ENCODE measurements at regions of chr9 and their contacts with region 1.

Region 1: DNA sequence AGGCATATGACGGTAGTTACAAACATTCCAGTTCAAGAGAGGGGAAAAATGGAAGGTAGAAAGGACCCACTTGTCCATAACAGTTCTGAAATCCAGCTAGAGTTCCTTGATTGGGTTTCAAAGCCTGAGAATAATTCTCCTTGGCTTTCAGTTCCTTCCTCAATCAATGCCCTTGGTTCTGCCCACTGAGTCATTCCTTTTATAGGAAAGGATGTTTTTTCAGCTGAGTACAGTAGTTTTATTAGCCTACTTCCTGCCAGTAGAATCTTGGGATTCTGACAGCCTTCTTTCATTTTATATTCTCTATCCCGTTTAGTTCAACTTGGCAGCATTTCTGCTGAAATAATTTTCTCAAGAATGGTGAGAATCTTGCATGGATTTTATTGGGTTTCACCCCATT is 386.9 kb upstream of the SMC2 start:
- DNase-seq: no peak
- H3K4me3 ChIP-seq: no peak overlapping the region
- H3K27ac ChIP-seq: no peak overlapping the region
- H3K4me1 ChIP-seq: no peaks in the 10 kb centered on the region
- H3K27me3 ChIP-seq: no peaks in the 10 kb centered on the region
- CTCF ChIP-seq: no peak
- EP300 ChIP-seq: no peak
- POLR2A ChIP-seq: no peak

Region 2: DNA sequence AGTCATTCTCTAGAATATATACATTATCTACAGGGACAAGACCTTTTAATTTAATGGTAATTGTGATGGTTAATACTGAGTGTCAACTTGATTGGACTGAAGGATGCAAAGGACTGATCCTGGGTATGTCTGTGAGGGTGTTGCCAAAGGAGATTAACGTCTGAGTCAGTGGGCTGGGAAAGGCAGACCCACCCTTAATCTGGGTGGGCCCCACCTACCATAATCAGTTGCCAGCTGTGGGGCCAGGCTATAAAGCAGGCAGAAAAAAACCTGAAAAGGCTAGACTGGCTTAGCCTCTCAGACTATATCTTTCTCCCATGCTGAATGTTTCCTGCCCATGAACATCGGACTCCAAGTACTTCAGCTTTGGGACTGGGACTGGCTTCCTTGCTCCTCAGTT is 274.7 kb after region 1 on chr9:
- in situ Hi-C with region 1: no loop called
- intact Hi-C with region 1: loop called (anchors 5 kb)
- DNase-seq: no peak
- H3K4me3 ChIP-seq: no peak overlapping the region
- H3K27ac ChIP-seq: no peak overlapping the region
- H3K4me1 ChIP-seq: no peaks in the 10 kb centered on the region
- H3K27me3 ChIP-seq: no peaks in the 10 kb centered on the region
- CTCF ChIP-seq: no peak
- EP300 ChIP-seq: no peak
- POLR2A ChIP-seq: no peak

Region 3: GRCh38 chr9:104009826-104010225 is 302.6 kb after region 1 on chr9:
- in situ Hi-C with region 1: no loop called
- intact Hi-C with region 1: no loop called
- DNase-seq: no peak
- H3K4me3 ChIP-seq: no peak overlapping the region
- H3K27ac ChIP-seq: no peak overlapping the region
- H3K4me1 ChIP-seq: no peaks in the 10 kb centered on the region
- H3K27me3 ChIP-seq: no peaks in the 10 kb centered on the region
- CTCF ChIP-seq: no peak
- EP300 ChIP-seq: no peak
- POLR2A ChIP-seq: no peak

Measured in transverse colon (tissue), 4 donors.